Heart left ventricle (tissue), 16 donors: ENCODE measurements at regions of chr14 and their contacts with region 1.

Region 1: GRCh38 chr14:33657476-33657875 is 293.4 kb downstream of the EGLN3 start:
- DNase-seq: no peak
- ATAC-seq: no peak
- H3K4me3 ChIP-seq: no peak overlapping the region
- H3K27ac ChIP-seq: no peak overlapping the region
- H3K4me1 ChIP-seq: no peaks in the 10 kb centered on the region
- H3K27me3 ChIP-seq: no peaks in the 10 kb centered on the region
- CTCF ChIP-seq: no peak
- POLR2A ChIP-seq: no peak

Region 2: DNA sequence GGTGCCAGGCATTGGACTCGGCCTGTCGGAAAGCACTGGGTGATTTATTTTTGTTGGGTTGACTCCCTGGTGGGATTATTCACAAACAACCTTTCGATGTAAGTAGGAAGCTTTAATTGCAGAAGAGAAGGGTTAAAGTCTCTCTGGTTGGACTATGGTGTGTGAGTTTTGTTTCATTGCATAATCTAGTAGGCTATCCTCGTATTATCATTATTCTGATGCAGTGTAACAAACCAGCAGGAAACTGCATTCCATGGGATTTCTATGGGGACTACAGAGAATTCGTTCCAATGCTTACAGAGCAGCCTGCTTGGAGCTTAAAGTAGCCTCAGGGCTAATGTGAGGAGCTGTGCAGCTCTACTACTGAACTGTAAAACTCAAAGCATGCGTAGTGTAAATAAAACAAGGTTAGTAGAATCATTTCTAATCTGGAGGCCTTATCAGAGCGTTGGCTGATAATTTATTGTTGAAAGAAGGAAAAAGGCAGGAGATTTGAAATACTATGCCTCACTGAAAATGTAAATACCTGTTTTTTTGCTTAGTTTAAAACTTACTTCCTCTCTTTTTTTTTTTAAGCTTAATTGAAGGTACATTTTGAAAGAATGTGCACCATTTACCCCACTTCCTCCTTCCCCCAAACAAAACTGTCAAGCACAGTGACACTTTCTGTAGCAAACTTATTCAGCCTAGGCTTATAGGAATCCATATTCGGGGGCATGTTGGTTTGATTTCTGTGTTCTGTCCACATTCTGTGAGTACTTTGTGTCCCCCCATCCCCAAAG is 492.1 kb before region 1 on chr14:
- intact Hi-C with region 1: loop called in 1 of 10 experiments (anchors 10 kb)
- DNase-seq: no peak
- ATAC-seq: no peak
- H3K4me3 ChIP-seq: no peak overlapping the region
- H3K27ac ChIP-seq: no peak overlapping the region
- H3K4me1 ChIP-seq: peaks cover 0 to 6% (median 0%) of the 10 kb centered on the region in 12 donors
- H3K27me3 ChIP-seq: no peaks in the 10 kb centered on the region
- CTCF ChIP-seq: no peak
- POLR2A ChIP-seq: no peak